Activated CD4-positive, alpha-beta T cell treated with anti-CD3 and anti-CD28 coated beads for 36 hours (primary cell): ENCODE measurements at regions of chr1 and their contacts with region 1.

Region 1: GRCh38 chr1:1374929-1375662 is at the start of gene AURKAIP1:
- DNase-seq: peak; percentile 98
- ATAC-seq: peak; percentile 97
- H3K4me3 Mint-ChIP-seq: peak within 1 kb of the TSS; percentile 87
- H3K27ac Mint-ChIP-seq: peak within 1 kb of the TSS; percentile 91
- H3K4me1 Mint-ChIP-seq: peaks cover 26% of the 10 kb centered on the region
- H3K27me3 Mint-ChIP-seq: no peaks in the 10 kb centered on the region
- total RNA-seq, gene AURKAIP1: 89.5 to 117 TPM

Region 2: DNA sequence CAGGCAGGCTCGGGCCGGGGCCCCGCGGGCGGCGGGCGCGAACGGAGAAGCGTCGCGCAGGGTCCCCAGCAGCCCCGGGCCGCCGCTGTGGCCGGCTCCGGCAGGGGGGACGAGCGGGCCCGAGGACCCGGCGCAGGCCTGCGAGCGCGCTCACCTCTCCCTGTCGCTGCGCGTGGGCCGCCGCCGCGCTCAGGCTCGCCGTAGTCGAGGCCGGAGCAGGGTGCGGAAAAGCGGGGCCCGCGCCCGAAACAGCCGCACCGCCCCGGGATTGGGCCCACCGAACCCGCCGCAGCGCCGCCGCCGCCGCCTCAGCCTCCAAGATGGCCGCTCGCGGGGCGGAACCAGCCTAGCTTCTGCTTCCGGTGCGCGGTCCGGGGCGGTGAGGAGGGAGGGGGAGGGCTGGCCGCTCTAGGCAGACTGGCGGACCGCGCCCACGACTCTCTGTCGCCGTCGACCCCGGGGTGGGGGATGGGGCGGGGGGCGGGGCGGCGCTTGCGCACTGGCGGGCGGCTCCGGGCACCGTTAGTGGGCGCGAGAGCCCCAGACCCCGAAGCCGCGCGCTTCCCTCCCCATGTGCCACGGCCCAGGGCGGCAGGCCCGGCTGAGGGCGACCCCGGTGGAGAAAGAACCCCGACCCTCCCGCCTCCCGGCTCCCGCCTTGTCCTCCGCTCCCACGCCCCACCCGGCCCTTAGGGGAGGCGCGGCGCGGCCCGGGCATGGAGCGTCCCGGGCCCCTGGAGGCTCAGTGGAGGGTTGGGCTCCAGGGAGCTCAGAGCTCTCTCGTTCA is 101.4 kb before region 1 on chr1 and contains the start of gene UBE2J2:
- CTCF ChIA-PET with region 1: no interaction called
- POLR2A ChIA-PET with region 1: no interaction called
- intact Hi-C with region 1: loop called in 1 of 2 experiments (anchors 1 kb)
- DNase-seq: peak; percentile 97
- ATAC-seq: peak; percentile 94
- H3K4me3 Mint-ChIP-seq: peak within 1 kb of the TSS; percentile 85
- H3K27ac Mint-ChIP-seq: peak within 1 kb of the TSS; percentile 83
- H3K4me1 Mint-ChIP-seq: peaks cover 36% of the 10 kb centered on the region
- H3K27me3 Mint-ChIP-seq: no peaks in the 10 kb centered on the region
- total RNA-seq, gene UBE2J2: 57.4 to 60.2 TPM

Region 3: GRCh38 chr1:1349256-1350012 is 25.7 kb before region 1 on chr1 and contains the start of gene DVL1:
- CTCF ChIA-PET with region 1: interaction called, 10 read pairs
- POLR2A ChIA-PET with region 1: no interaction called
- intact Hi-C with region 1: loop called in 1 of 2 experiments (anchors 1 kb)
- DNase-seq: peak; percentile 81
- ATAC-seq: peak; percentile 71
- H3K4me3 Mint-ChIP-seq: peak within 1 kb of the TSS; percentile 74
- H3K27ac Mint-ChIP-seq: no peak within 1 kb of the TSS
- H3K4me1 Mint-ChIP-seq: peaks cover 25% of the 10 kb centered on the region
- H3K27me3 Mint-ChIP-seq: peaks cover 11% of the 10 kb centered on the region
- total RNA-seq, gene DVL1: 35.3 to 35.5 TPM

Region 4: DNA sequence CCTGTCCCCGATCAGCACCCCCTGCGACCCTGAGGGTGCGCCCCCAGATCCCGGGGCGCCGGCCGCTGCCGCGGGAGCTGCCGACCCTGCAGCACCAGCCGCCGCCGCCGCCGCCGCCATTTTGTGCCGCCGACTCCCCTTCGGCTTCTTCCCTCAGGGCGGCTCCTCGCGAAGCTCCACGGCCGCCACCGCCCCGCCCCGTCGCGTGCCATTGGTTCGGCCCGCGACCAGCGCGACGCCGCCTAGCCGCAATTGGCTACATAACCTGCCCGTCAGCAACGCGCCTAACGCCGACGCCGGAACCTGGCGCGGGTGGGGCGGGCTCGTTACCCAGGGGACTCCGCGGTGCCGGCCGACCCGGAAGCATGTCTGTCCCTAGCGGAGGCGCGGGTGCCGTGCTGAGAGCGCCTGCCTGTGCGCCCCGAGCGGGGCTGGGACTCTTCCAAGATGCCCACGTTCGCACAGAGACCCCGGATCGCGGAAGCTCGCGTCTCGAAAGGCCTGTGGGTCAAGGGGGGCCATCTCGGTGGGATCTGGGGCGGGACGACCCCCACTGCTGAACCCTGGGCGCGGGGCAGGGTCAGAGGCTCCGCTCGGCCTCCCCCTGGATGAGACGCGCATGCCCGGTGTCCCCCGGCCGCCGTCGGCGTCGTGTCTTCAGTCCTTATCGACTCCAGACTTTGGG is 24.2 kb after region 1 on chr1 and contains the start of gene CCNL2:
- CTCF ChIA-PET with region 1: interaction called, 4 read pairs
- POLR2A ChIA-PET with region 1: interaction called, 12 read pairs
- intact Hi-C with region 1: loop called in 1 of 2 experiments (anchors 1 kb)
- DNase-seq: peak; percentile 100
- ATAC-seq: peak; percentile 97
- H3K4me3 Mint-ChIP-seq: peak within 1 kb of the TSS; percentile 93
- H3K27ac Mint-ChIP-seq: peak within 1 kb of the TSS; percentile 91
- H3K4me1 Mint-ChIP-seq: peaks cover 52% of the 10 kb centered on the region
- H3K27me3 Mint-ChIP-seq: no peaks in the 10 kb centered on the region
- total RNA-seq, gene CCNL2: 73.6 to 89.7 TPM

Region 5: GRCh38 chr1:1477206-1477605 is 102.1 kb after region 1 on chr1:
- CTCF ChIA-PET with region 1: no interaction called
- POLR2A ChIA-PET with region 1: no interaction called
- intact Hi-C with region 1: no loop called
- DNase-seq: no peak
- ATAC-seq: no peak
- H3K4me3 Mint-ChIP-seq: no peak overlapping the region
- H3K27ac Mint-ChIP-seq: no peak overlapping the region
- H3K4me1 Mint-ChIP-seq: peaks cover 9% of the 10 kb centered on the region
- H3K27me3 Mint-ChIP-seq: no peaks in the 10 kb centered on the region

Region 6: GRCh38 chr1:1511533-1512285 is 136.6 kb after region 1 on chr1 and contains the start of gene ATAD3A:
- CTCF ChIA-PET with region 1: no interaction called
- POLR2A ChIA-PET with region 1: no interaction called
- intact Hi-C with region 1: loop called in 1 of 2 experiments (anchors 1 kb)
- DNase-seq: peak; percentile 99
- ATAC-seq: peak; percentile 97
- H3K4me3 Mint-ChIP-seq: peak within 1 kb of the TSS; percentile 93
- H3K27ac Mint-ChIP-seq: peak within 1 kb of the TSS; percentile 97
- H3K4me1 Mint-ChIP-seq: peaks cover 7% of the 10 kb centered on the region
- H3K27me3 Mint-ChIP-seq: no peaks in the 10 kb centered on the region
- total RNA-seq, gene ATAD3A: 39.9 to 42.9 TPM